HAP-1 (cell line): ENCODE measurements at regions of chr20 and their contacts with region 1.

Region 1: GRCh38 chr20:38242848-38243449 is 17.6 kb downstream of the KIAA1755 start:
- DNase-seq: peak in 1 of 2 experiments; percentile 41
- H3K4me3 ChIP-seq: no peak overlapping the region
- H3K4me1 ChIP-seq: no peaks in the 10 kb centered on the region
- H3K27me3 ChIP-seq: no peaks in the 10 kb centered on the region

Region 2: DNA sequence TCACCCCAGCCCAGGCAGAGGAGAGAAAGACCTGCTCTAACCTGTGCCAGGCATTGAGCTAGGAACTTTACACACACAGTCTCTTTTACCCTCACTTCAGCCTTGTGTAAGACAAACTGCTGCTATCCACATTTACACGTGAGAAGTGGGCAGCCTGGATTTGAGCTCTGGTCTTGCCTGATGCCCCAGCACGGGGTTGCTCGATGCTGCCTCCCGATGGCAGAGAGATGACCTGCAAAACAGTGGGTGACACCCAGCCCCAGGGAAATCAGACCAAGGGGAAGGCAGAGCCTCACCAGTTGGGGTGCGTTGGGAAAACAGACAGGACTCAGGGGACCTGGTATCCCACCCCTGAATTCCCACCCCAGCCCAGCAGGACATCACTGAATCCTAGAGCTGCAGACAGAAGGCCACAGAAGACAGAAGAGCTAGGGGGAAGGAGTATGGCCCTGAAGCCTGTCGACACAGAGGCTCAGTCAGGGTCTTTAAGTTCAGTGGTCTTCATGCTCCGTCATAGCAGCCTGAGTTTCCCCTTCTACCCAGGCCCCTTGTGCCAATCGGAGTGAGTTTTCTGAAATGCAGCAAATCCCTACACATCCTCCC is 62.0 kb after region 1 on chr20:
- in situ Hi-C with region 1: loop called (anchors 10 kb)
- DNase-seq: peak in 1 of 2 experiments; percentile 57
- H3K4me3 ChIP-seq: no peak overlapping the region
- H3K4me1 ChIP-seq: no peaks in the 10 kb centered on the region
- H3K27me3 ChIP-seq: peaks cover 13% of the 10 kb centered on the region; the same call in 1 of the 2 replicates